Mammary epithelial cell (primary cell): ENCODE measurements at regions of chr20 and their contacts with region 1.

Region 1: DNA sequence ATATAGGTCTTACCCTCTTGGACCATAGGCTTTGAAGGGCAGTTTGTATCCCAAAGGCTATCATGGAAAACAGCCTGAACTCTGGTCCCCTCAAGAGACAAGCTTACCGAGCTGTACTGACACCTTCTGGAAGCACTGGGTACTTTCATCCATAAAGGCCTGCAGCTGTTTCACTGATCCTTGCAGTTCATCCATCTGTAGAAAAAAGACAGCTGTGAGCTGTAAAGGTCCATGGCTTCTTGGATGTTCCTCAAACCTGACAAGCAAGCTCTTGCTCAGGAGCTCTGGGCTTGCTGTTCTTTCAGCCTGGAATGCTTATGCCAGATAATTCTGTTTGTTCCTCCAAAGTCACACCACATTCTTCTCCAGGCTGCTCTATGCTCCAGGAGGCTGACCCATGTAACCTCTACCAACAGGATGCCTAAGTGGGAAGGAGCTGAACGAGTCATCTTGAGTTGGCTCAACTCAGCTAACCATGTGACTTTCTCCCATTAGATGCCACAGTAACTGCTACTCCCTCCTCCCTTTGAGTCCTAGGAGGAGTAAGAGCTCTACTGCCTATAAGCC is 8.8 kb upstream of the NDRG3 start:
- DNase-seq: peak; percentile 53
- H3K4me3 ChIP-seq: no peak overlapping the region
- H3K27ac ChIP-seq: no peak overlapping the region
- H3K4me1 ChIP-seq: no peaks in the 10 kb centered on the region
- H3K27me3 ChIP-seq: no peaks in the 10 kb centered on the region
- CTCF ChIP-seq: peak; percentile 82 to 83

Region 2: GRCh38 chr20:36199345-36200257 is 555.1 kb before region 1 on chr20:
- CTCF ChIA-PET with region 1: no interaction called
- dilution Hi-C with region 1: no loop called
- in situ Hi-C with region 1: no loop called
- intact Hi-C with region 1: loop called (anchors 1 kb)
- DNase-seq: peak; percentile 54
- H3K4me3 ChIP-seq: no peak overlapping the region
- H3K27ac ChIP-seq: no peak overlapping the region
- H3K4me1 ChIP-seq: no peaks in the 10 kb centered on the region
- H3K27me3 ChIP-seq: no peaks in the 10 kb centered on the region
- CTCF ChIP-seq: peak; percentile 92 to 97

Region 3: GRCh38 chr20:36214684-36215256 is 540.0 kb before region 1 on chr20:
- CTCF ChIA-PET with region 1: no interaction called
- dilution Hi-C with region 1: no loop called
- in situ Hi-C with region 1: no loop called
- intact Hi-C with region 1: loop called (anchors 2 kb)
- DNase-seq: peak; percentile 18
- H3K4me3 ChIP-seq: no peak overlapping the region
- H3K27ac ChIP-seq: no peak overlapping the region
- H3K4me1 ChIP-seq: no peaks in the 10 kb centered on the region
- H3K27me3 ChIP-seq: no peaks in the 10 kb centered on the region
- CTCF ChIP-seq: peak; percentile 72

Region 4: DNA sequence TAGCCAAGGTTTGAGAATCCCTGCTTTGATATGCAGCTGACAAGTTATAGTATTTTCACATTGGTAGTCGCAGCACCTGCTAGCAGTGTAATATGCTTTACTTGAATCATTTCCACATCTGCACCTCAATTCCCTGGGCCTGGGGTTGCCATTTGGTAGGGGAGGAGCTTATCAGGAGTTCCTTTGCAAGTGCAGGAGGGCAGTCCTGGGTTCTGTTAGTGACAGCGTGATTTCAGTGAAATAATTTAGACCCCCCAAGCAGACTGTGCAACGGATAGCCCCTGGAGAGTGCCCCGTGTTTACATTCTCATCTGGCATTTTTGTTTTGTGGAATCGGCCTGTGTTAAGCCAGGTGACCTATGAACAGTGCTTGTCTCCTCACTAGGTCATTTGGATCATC is 143.1 kb before region 1 on chr20:
- CTCF ChIA-PET with region 1: no interaction called
- dilution Hi-C with region 1: no loop called
- in situ Hi-C with region 1: no loop called
- intact Hi-C with region 1: loop called (anchors 1 kb)
- DNase-seq: no peak
- H3K4me3 ChIP-seq: no peak overlapping the region
- H3K27ac ChIP-seq: no peak overlapping the region
- H3K4me1 ChIP-seq: peaks cover 10% of the 10 kb centered on the region
- H3K27me3 ChIP-seq: no peaks in the 10 kb centered on the region
- CTCF ChIP-seq: no peak

Region 5: DNA sequence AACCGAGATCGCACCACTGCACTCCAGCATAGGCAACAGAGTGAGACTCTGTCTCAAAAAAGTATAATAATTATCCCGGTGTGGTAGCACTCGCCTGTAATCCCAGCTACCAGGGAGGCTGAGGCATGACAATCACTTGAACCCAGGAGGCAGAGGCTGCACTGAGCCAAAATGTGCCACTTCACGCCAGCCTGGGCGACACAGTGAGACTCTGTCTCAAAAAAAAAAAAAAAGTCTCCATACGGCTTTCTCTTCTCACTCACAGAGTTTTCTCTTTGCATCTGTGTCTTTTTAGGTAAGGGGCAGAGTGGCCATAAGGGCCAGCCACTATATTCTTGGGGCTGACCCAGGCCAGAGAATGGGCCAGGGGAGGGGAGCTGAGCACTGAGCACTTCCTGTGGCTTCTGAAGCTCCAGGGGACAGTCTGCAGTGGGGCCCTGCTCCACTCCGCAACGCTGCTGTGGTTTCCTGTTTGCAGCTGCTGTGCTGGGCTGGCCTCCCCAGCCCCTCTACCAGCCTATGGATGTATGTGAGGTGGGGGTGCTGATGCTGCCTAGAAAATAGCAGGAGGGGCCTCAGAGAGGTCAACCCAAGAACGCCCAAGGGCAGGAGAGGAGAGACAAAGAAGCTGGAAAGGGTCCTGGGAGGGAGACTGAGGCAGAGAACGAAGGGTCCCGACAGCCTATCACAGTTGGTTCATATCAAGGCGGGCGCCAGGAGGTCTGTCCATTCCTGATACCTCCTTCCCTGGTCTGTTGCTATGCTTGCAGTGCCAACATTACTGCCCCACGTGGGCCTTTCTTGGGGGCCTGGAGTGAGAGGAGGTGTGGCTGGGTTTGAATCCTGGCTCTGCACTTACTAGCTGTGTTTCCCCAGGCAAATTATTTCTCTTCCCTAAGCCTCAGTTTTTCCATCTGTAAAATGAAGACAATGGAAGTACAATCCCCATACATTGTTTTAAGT is 124.7 kb before region 1 on chr20:
- CTCF ChIA-PET with region 1: no interaction called
- dilution Hi-C with region 1: no loop called
- in situ Hi-C with region 1: no loop called
- intact Hi-C with region 1: no loop called
- DNase-seq: no peak
- H3K4me3 ChIP-seq: no peak overlapping the region
- H3K27ac ChIP-seq: no peak overlapping the region
- H3K4me1 ChIP-seq: no peaks in the 10 kb centered on the region
- H3K27me3 ChIP-seq: no peaks in the 10 kb centered on the region
- CTCF ChIP-seq: no peak

Region 6: GRCh38 chr20:36717657-36718056 is 37.1 kb before region 1 on chr20:
- CTCF ChIA-PET with region 1: no interaction called
- dilution Hi-C with region 1: no loop called
- in situ Hi-C with region 1: no loop called
- intact Hi-C with region 1: loop called (anchors 1 kb)
- DNase-seq: no peak
- H3K4me3 ChIP-seq: no peak overlapping the region
- H3K27ac ChIP-seq: no peak overlapping the region
- H3K4me1 ChIP-seq: no peaks in the 10 kb centered on the region
- H3K27me3 ChIP-seq: no peaks in the 10 kb centered on the region
- CTCF ChIP-seq: peak; percentile 18 to 47

Region 7: DNA sequence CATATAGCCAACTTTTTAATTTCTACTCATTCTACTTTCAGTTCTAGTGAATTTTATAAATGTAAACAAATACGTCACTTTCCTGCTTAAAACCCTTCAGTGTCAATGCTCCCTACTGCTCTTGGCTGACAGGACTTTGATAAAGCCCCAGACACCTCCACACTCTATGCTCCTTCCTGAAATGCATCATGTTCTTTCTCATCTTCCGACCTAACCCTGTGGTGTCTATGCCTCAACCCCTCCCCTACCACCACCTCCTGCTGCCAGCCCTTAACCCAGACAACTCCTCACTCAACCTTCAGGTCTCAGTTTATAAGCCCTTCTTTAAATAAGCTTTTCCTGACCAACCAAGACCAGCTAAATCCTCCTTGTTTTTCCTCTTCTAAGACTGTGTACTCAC is 140.3 kb after region 1 on chr20:
- CTCF ChIA-PET with region 1: no interaction called
- dilution Hi-C with region 1: loop called (anchors 10 kb)
- in situ Hi-C with region 1: no loop called
- intact Hi-C with region 1: no loop called
- DNase-seq: no peak
- H3K4me3 ChIP-seq: no peak overlapping the region
- H3K27ac ChIP-seq: no peak overlapping the region
- H3K4me1 ChIP-seq: no peaks in the 10 kb centered on the region
- H3K27me3 ChIP-seq: no peaks in the 10 kb centered on the region
- CTCF ChIP-seq: no peak